PC-9 (cell line): ENCODE measurements at regions of chr11 and their contacts with region 1.

Region 1: DNA sequence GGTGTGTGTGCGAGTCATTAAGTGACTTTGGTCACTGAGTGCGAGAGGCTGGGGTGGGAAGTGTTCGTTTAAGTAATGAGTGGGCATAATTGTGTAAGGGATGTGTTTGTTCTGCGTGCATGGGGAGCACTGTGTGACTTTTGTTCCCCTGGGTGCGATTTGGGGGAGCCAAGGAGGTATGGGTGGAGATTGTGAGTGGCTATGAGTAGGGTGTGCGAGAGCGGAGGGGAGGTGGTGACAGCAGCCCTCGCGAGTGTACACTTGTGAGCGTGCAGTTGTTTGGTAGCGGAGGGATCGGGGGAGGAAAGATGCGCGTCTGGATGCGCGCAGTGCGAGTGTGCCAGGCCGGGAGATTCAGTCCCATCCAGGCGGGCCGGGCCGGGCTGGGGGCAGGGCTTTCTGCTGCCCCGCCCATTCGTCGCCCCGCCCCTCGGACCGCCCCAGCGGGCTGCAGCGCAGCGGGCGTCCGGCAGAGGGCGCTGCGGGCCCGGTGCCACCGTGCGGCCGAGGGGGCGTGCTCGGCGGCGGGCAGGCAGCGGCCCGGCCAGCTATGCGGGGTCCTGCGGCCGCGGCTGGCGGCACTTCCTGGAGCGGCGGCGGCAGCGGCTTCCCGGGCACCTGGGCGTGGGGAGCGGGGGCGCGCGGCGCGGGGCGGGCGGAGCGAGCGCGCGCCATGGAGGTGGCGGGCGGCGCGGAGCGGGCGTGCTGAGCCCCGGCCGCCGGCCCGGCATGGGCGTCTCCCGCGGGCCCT is at the start of gene DGKZ:
- DNase-seq: peak; percentile 46 to 97
- H3K4me3 ChIP-seq: peak within 1 kb of the TSS; percentile 97
- H3K27ac ChIP-seq: no peak within 1 kb of the TSS
- H3K4me1 ChIP-seq: peaks cover 36% of the 10 kb centered on the region
- H3K27me3 ChIP-seq: no peaks in the 10 kb centered on the region
- CTCF ChIP-seq: peak; percentile 54
- total RNA-seq, gene DGKZ: 49.3 and 67.5 TPM in 2 replicates

Region 2: GRCh38 chr11:46121724-46122477 is 225.2 kb before region 1 on chr11:
- CTCF ChIA-PET with region 1: no interaction called
- POLR2A ChIA-PET with region 1: no interaction called
- intact Hi-C with region 1: loop called (anchors 10 kb)
- DNase-seq: peak; percentile 74 to 81
- H3K4me3 ChIP-seq: peak overlapping the region; percentile 64
- H3K27ac ChIP-seq: peak overlapping the region; percentile 24
- H3K4me1 ChIP-seq: peaks cover 41% of the 10 kb centered on the region
- H3K27me3 ChIP-seq: no peaks in the 10 kb centered on the region
- CTCF ChIP-seq: no peak

Region 3: GRCh38 chr11:46308631-46309419 is 38.2 kb before region 1 on chr11:
- CTCF ChIA-PET with region 1: interaction called, 12 read pairs
- POLR2A ChIA-PET with region 1: no interaction called
- intact Hi-C with region 1: no loop called
- DNase-seq: peak; percentile 54 to 74
- H3K4me3 ChIP-seq: no peak overlapping the region
- H3K27ac ChIP-seq: no peak overlapping the region
- H3K4me1 ChIP-seq: peaks cover 31% of the 10 kb centered on the region
- H3K27me3 ChIP-seq: no peaks in the 10 kb centered on the region
- CTCF ChIP-seq: peak; percentile 99

Region 4: DNA sequence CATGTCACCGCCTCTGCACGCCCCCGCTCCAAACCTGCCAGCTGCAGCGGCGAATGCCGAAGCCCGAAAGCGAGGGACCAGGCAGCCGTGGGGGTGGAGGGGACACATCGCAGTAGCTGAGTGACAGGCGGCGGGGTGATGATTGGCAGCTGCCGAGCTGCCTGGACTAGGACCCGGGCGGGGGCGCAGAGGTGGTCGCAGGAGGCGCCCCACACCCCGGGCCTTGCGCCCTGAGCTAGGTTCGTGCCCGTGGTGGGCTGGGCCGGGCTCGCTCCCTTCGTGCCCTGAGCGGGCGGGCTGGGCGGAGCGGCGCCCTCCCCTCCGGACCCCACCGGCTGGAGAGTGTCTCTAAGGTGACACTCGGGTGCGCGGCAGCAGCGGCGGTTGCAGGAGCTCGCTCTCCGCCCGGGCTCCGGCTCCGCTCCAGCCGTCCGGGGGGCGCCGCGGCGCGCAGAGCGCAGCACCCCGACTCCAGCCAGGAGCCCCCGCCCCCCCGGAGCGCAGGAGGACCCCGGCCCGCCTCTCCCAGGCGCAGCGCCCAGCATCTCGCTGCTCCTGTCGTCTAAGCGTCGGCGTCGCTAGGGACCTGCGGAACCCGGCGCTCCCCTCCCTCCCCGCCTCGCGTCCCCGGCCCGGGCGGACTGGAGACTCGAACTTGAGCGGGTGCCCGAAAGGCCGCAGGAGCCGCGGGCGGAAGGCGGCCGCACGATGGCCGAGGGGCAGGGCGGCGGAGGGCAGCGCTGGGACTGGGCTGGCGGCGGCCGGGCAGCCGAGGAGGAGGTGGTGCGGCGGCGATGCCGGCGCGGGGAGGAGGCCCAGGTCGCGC is 14.3 kb before region 1 on chr11:
- CTCF ChIA-PET with region 1: no interaction called
- POLR2A ChIA-PET with region 1: interaction called, 29 read pairs
- intact Hi-C with region 1: no loop called
- DNase-seq: no peak
- H3K4me3 ChIP-seq: no peak overlapping the region
- H3K27ac ChIP-seq: no peak overlapping the region
- H3K4me1 ChIP-seq: peaks cover 39% of the 10 kb centered on the region
- H3K27me3 ChIP-seq: no peaks in the 10 kb centered on the region
- CTCF ChIP-seq: no peak

Region 5: DNA sequence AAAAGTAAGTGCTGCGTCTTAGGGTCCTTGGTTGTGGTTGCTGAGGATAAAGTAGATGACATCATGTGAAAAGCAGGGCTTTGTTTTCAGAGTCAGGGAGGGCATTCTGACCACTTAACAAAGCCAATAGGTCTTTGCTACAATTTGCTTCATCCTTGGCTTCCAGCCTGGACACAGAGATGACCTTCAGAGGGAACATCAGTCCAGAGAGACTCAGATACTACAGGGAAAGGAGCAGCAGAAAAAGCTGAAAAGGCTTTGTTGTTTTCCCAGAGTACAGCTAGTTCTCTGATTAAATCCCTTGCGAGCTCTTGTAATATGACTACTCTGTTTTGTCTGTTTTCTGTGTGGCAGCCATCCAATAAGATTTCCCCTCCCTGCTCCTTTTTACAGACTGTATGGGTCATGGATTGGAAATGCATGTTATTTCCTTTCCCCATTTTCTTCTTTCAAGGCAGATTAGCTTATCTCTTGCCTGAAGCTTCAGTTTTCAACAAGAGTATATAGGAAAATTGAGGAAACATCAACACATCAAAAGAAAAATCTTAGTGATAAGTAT is 302.2 kb after region 1 on chr11:
- CTCF ChIA-PET with region 1: no interaction called
- POLR2A ChIA-PET with region 1: interaction called, 12 read pairs
- intact Hi-C with region 1: no loop called
- DNase-seq: peak in 1 of 2 experiments; percentile 19
- H3K4me3 ChIP-seq: no peak overlapping the region
- H3K27ac ChIP-seq: no peak overlapping the region
- H3K4me1 ChIP-seq: no peaks in the 10 kb centered on the region
- H3K27me3 ChIP-seq: no peaks in the 10 kb centered on the region
- CTCF ChIP-seq: no peak